Activated CD4-positive, alpha-beta T cell treated with anti-CD3 and anti-CD28 coated beads for 36 hours (primary cell): ENCODE measurements at regions of chr14 and their contacts with region 1.

Region 1: GRCh38 chr14:61326847-61327246 is 5.5 kb downstream of the PRKCH start:
- DNase-seq: no peak
- ATAC-seq: no peak
- H3K4me3 Mint-ChIP-seq: peak overlapping the region; percentile 92
- H3K27ac Mint-ChIP-seq: peak overlapping the region; percentile 94
- H3K4me1 Mint-ChIP-seq: peaks cover 71% of the 10 kb centered on the region
- H3K27me3 Mint-ChIP-seq: no peaks in the 10 kb centered on the region

Region 2: GRCh38 chr14:61342486-61342885 is 15.6 kb after region 1 on chr14:
- CTCF ChIA-PET with region 1: interaction called, 6 read pairs
- POLR2A ChIA-PET with region 1: interaction called, 24 read pairs
- intact Hi-C with region 1: loop called (anchors 1 kb)
- DNase-seq: peak; percentile 91
- ATAC-seq: peak; percentile 60
- H3K4me3 Mint-ChIP-seq: peak overlapping the region; percentile 86
- H3K27ac Mint-ChIP-seq: peak overlapping the region; percentile 99
- H3K4me1 Mint-ChIP-seq: peaks cover 94% of the 10 kb centered on the region
- H3K27me3 Mint-ChIP-seq: no peaks in the 10 kb centered on the region

Region 3: DNA sequence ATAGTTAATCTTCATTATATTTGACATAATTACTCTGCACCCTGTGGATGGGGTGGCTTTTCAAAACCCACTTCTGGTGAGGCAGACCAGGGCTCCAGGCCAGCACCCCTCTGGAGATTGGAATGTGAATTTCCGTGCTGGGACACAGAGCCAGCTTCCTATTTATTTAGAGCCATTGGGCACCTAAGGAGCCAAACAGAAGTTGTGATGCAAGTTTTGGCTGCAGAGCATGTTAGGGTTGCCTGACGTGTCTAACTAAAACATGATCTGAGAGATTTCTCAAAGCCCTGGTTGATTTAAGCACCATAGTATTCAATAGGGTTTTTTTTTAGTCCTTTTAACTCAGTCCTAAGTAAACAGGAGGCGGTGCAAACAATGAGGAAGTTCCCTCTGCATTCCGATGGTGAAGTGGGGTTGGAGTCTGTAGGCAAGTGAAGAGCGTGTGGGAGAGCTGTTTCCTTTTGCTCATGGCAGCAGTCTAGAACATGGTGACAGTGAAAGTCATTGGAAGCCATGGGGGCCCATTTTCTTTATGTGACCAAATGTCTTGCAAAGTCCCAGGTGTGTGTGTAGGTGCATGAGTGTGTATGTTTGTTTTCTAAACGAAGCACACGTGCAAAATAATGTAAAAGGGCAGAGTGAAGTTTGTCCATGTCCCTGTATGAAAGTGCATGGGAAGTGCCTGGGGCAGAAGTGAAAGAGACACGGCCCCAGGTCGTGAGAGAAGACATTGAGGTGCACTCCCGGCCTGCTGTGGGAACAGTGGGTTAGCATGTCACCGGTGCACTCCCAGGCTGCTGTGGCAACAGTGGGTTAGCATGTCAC is 112.2 kb after region 1 on chr14:
- CTCF ChIA-PET with region 1: no interaction called
- POLR2A ChIA-PET with region 1: interaction called, 3 read pairs
- intact Hi-C with region 1: loop called in 1 of 2 experiments (anchors 5 kb)
- DNase-seq: peak; percentile 63
- ATAC-seq: peak; percentile 54
- H3K4me3 Mint-ChIP-seq: peak overlapping the region; percentile 68
- H3K27ac Mint-ChIP-seq: peak overlapping the region; percentile 87
- H3K4me1 Mint-ChIP-seq: peaks cover 92% of the 10 kb centered on the region
- H3K27me3 Mint-ChIP-seq: no peaks in the 10 kb centered on the region